CD8-positive, alpha-beta T cell (primary cell): ENCODE measurements at regions of chr3 and their contacts with region 1.

Region 1: GRCh38 chr3:18559331-18559842 is 134.2 kb upstream of the SATB1 start:
- DNase-seq: peak in 5 of 9 experiments; percentile 28 to 73 (median 59)
- ATAC-seq: peak; percentile 39
- H3K4me3 ChIP-seq: no peak overlapping the region
- H3K4me3 Mint-ChIP-seq: peak overlapping the region; percentile 44
- H3K27ac ChIP-seq: no peak overlapping the region
- H3K27ac Mint-ChIP-seq: peak overlapping the region; percentile 69
- H3K4me1 ChIP-seq: peaks cover 25% of the 10 kb centered on the region
- H3K4me1 Mint-ChIP-seq: peaks cover 54% of the 10 kb centered on the region
- H3K27me3 ChIP-seq: no peaks in the 10 kb centered on the region
- H3K27me3 Mint-ChIP-seq: no peaks in the 10 kb centered on the region
- CTCF ChIP-seq: peak; percentile 73

Region 2: DNA sequence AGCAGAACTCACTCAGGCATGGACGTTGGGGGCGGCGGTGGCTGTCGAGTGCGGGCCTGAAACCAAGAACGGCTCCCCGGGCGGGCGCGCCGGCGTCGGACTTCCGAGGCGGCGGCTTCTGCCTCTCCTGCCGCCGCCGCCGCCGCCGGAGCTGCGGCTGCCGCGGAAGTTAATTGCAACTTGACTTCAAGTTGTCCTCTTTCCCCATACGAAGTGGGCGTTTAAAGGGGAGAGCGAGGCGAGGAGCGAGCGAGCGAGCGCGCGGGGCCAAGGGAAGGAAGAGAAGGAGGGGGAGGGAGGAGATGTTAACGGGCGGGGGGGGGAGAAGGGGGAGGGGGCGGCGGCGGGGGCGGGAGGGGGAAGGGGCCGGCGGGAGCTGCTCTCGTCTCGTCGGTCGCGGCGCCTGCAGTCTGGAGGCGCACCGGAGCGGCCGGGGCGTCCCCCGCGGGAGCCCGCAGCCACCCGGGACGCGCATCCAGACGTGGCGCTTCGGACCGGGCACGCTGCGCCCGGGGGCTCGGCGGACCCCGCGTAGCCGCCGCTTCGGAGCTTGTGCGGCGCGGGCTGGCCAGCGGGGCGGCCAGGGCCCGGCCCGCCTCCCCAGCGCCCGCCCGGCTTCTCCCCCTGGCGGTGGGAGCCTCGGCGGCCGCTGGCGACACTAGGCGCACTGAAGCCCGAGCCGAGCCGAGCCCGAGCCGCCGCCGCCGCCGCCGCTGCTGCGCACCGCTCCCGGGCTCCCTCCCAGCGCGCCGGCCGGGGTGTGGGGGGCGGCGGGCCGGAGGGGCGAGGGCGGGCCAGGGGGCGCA is 114.6 kb before region 1 on chr3:
- CTCF ChIA-PET with region 1: interaction called, 5 read pairs
- POLR2A ChIA-PET with region 1: interaction called, 7 read pairs
- intact Hi-C with region 1: loop called (anchors 2 to 5 kb)
- DNase-seq: peak; percentile 53 to 91 (median 78)
- ATAC-seq: peak; percentile 61
- H3K4me3 ChIP-seq: peak overlapping the region; percentile 81 to 91
- H3K4me3 Mint-ChIP-seq: peak overlapping the region; percentile 92
- H3K27ac ChIP-seq: peak overlapping the region; percentile 76 to 90
- H3K27ac Mint-ChIP-seq: peak overlapping the region; percentile 97
- H3K4me1 ChIP-seq: peaks cover 4% of the 10 kb centered on the region
- H3K4me1 Mint-ChIP-seq: peaks cover 48% of the 10 kb centered on the region
- H3K27me3 ChIP-seq: no peaks in the 10 kb centered on the region
- H3K27me3 Mint-ChIP-seq: no peaks in the 10 kb centered on the region
- CTCF ChIP-seq: no peak

Region 3: GRCh38 chr3:18489939-18490338 is 69.4 kb before region 1 on chr3:
- CTCF ChIA-PET with region 1: interaction called, 5 read pairs
- POLR2A ChIA-PET with region 1: no interaction called
- intact Hi-C with region 1: loop called in 1 of 2 experiments (anchors 5 kb)
- DNase-seq: peak in 6 of 9 experiments; percentile 12 to 72 (median 54)
- ATAC-seq: peak; percentile 46
- H3K4me3 ChIP-seq: no peak overlapping the region
- H3K4me3 Mint-ChIP-seq: peak overlapping the region; percentile 9
- H3K27ac ChIP-seq: no peak overlapping the region
- H3K27ac Mint-ChIP-seq: peak overlapping the region; percentile 78
- H3K4me1 ChIP-seq: peaks cover 24% of the 10 kb centered on the region
- H3K4me1 Mint-ChIP-seq: peaks cover 38% of the 10 kb centered on the region
- H3K27me3 ChIP-seq: no peaks in the 10 kb centered on the region
- H3K27me3 Mint-ChIP-seq: no peaks in the 10 kb centered on the region
- CTCF ChIP-seq: no peak

Region 4: DNA sequence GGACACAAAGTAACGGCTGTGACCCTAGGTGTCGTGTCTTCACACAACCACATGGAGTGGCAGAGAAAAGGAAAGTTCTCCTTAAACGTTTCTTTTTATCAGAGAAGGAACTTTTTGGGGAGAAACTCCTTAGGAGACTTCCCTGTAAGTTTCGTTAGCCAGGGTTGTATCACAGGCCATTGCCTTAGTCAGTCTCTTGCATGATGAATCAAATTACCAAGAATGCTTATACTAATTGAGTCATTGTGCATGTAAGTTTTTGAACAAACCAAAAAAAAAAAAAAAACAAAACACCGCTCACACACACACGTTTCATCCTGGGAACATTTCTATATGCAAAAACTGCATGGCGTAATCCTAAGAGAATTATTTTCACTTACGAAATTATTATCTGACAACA is 16.2 kb after region 1 on chr3:
- CTCF ChIA-PET with region 1: interaction called, 36 read pairs
- POLR2A ChIA-PET with region 1: no interaction called
- intact Hi-C with region 1: no loop called
- DNase-seq: no peak
- ATAC-seq: no peak
- H3K4me3 ChIP-seq: no peak overlapping the region
- H3K4me3 Mint-ChIP-seq: no peak overlapping the region
- H3K27ac ChIP-seq: no peak overlapping the region
- H3K27ac Mint-ChIP-seq: no peak overlapping the region
- H3K4me1 ChIP-seq: no peaks in the 10 kb centered on the region
- H3K4me1 Mint-ChIP-seq: peaks cover 16% of the 10 kb centered on the region
- H3K27me3 ChIP-seq: no peaks in the 10 kb centered on the region
- H3K27me3 Mint-ChIP-seq: no peaks in the 10 kb centered on the region
- CTCF ChIP-seq: no peak

Region 5: DNA sequence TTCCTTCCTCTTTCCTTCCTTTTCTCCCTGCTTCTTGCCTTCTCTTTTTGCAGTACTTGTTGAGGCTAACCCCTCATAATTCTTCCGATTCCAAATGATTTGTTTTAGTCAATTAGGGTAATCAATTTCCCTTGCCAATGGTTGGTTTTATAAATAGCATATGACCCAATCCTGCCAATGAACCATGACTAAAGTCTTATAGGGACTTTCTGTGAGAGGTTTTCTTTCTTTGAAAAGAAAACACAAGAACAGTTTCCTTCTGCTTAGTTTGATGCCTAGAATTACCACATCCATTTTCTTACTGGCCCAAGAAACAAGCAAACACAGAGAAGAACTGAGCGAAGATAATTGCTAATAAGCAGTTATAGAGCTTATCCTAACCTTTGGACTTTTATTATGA is 158.2 kb after region 1 on chr3:
- CTCF ChIA-PET with region 1: interaction called, 12 read pairs
- POLR2A ChIA-PET with region 1: no interaction called
- intact Hi-C with region 1: no loop called
- DNase-seq: no peak
- ATAC-seq: peak; percentile 21
- H3K4me3 ChIP-seq: no peak overlapping the region
- H3K4me3 Mint-ChIP-seq: no peak overlapping the region
- H3K27ac ChIP-seq: no peak overlapping the region
- H3K27ac Mint-ChIP-seq: peak overlapping the region; percentile 85
- H3K4me1 ChIP-seq: peaks cover 55% of the 10 kb centered on the region
- H3K4me1 Mint-ChIP-seq: peaks cover 66% of the 10 kb centered on the region
- H3K27me3 ChIP-seq: no peaks in the 10 kb centered on the region
- H3K27me3 Mint-ChIP-seq: no peaks in the 10 kb centered on the region
- CTCF ChIP-seq: no peak

Region 6: GRCh38 chr3:18758047-18758704 is 198.8 kb after region 1 on chr3:
- CTCF ChIA-PET with region 1: interaction called, 85 read pairs
- POLR2A ChIA-PET with region 1: interaction called, 3 read pairs
- intact Hi-C with region 1: loop called (anchors 1 kb)
- DNase-seq: peak in 6 of 9 experiments; percentile 12 to 91 (median 36)
- ATAC-seq: peak; percentile 97
- H3K4me3 ChIP-seq: no peak overlapping the region
- H3K4me3 Mint-ChIP-seq: no peak overlapping the region
- H3K27ac ChIP-seq: no peak overlapping the region
- H3K27ac Mint-ChIP-seq: peak overlapping the region; percentile 64
- H3K4me1 ChIP-seq: peaks cover 18% of the 10 kb centered on the region
- H3K4me1 Mint-ChIP-seq: peaks cover 44% of the 10 kb centered on the region
- H3K27me3 ChIP-seq: no peaks in the 10 kb centered on the region
- H3K27me3 Mint-ChIP-seq: no peaks in the 10 kb centered on the region
- CTCF ChIP-seq: peak; percentile 88